CD4-positive, alpha-beta memory T cell (primary cell): ENCODE measurements at regions of chr12 and their contacts with region 1.

Region 1: DNA sequence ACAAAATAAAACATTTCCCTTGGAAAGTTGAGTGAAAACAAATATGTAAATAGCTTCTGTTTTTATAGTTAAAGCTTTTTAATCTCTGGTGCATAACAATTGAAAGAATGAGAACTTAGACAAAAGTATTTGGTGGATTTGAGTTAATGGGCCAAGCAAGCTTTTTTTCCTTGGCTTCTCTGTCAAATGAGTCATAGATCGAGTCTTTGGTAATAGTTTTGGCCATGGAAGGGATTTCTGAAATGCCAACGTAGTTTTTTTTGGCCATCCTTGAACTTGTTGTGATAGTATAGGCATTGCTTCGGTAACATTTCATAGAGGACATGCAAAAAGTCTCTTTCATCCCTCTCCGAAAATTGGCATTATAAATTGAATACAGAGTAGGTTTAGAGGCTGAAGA is 34.9 kb downstream of the GPR19 start:
- DNase-seq: no peak
- H3K4me3 ChIP-seq: no peak overlapping the region
- H3K4me3 Mint-ChIP-seq: no peak overlapping the region
- H3K27ac ChIP-seq: no peak overlapping the region
- H3K27ac Mint-ChIP-seq: no peak overlapping the region
- H3K4me1 ChIP-seq: peaks cover 2% of the 10 kb centered on the region
- H3K4me1 Mint-ChIP-seq: peaks cover 0 to 1% (median under 1%) of the 10 kb centered on the region in 4 donors
- H3K27me3 ChIP-seq: no peaks in the 10 kb centered on the region
- H3K27me3 Mint-ChIP-seq: no peaks in the 10 kb centered on the region

Region 2: GRCh38 chr12:12600255-12601034 is 60.6 kb before region 1 on chr12:
- CTCF ChIA-PET with region 1: no interaction called
- POLR2A ChIA-PET with region 1: no interaction called
- intact Hi-C with region 1: no loop called
- DNase-seq: no peak
- H3K4me3 ChIP-seq: no peak overlapping the region
- H3K4me3 Mint-ChIP-seq: no peak overlapping the region
- H3K27ac ChIP-seq: no peak overlapping the region
- H3K27ac Mint-ChIP-seq: no peak overlapping the region
- H3K4me1 ChIP-seq: no peaks in the 10 kb centered on the region
- H3K4me1 Mint-ChIP-seq: peaks cover 0 to 2% (median 0%) of the 10 kb centered on the region in 4 donors
- H3K27me3 ChIP-seq: no peaks in the 10 kb centered on the region
- H3K27me3 Mint-ChIP-seq: no peaks in the 10 kb centered on the region

Region 3: DNA sequence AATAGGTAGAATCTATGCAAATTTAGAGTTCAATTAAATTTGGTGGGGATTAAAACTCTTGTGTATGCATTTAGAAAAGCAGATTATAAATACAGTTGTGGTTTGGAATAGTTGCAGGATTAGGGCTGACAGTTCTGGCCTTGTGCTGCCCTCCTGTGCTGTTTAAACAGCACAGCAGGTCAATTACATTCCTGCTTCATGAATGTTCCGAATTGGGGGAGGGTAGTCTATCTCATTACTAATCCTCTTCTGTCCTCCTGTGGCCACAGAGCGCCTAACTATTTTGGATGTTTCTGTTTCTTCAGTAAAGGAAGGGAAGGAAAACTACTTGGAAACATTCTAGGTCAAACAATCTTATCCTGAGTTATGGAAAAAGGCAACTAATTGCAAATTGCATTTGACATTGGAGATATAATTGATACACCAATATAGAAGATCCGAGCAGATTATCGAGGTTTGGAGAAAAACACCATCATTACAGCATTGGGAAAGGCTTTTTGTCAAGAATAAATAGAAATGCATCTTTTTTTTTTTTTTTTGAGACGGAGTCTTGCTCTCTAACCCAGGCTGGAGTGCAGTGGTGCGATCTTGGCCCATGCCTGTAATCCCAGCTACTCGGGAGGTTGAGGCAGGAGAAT is 43.6 kb after region 1 on chr12:
- CTCF ChIA-PET with region 1: interaction called, 16 read pairs
- POLR2A ChIA-PET with region 1: interaction called, 3 read pairs
- intact Hi-C with region 1: loop called (anchors 2 kb)
- DNase-seq: peak in 4 of 5 donors; percentile 36 to 58 (median 48)
- H3K4me3 ChIP-seq: no peak overlapping the region
- H3K4me3 Mint-ChIP-seq: peak overlapping the region in 6 of 8 donors; percentile 2 to 84 (median 36)
- H3K27ac ChIP-seq: no peak overlapping the region
- H3K27ac Mint-ChIP-seq: peak overlapping the region in 5 of 7 donors; percentile 50 to 88 (median 73)
- H3K4me1 ChIP-seq: peaks cover 37% of the 10 kb centered on the region
- H3K4me1 Mint-ChIP-seq: peaks cover 14 to 32% (median 20%) of the 10 kb centered on the region in 4 donors
- H3K27me3 ChIP-seq: no peaks in the 10 kb centered on the region
- H3K27me3 Mint-ChIP-seq: no peaks in the 10 kb centered on the region